Posterior vena cava (tissue), 2 donors: ENCODE measurements at regions of chr14 and their contacts with region 1.

Region 1: GRCh38 chr14:94332063-94332583 is 9.0 kb upstream of the SERPINA6 start:
- DNase-seq: no peak

Region 2: DNA sequence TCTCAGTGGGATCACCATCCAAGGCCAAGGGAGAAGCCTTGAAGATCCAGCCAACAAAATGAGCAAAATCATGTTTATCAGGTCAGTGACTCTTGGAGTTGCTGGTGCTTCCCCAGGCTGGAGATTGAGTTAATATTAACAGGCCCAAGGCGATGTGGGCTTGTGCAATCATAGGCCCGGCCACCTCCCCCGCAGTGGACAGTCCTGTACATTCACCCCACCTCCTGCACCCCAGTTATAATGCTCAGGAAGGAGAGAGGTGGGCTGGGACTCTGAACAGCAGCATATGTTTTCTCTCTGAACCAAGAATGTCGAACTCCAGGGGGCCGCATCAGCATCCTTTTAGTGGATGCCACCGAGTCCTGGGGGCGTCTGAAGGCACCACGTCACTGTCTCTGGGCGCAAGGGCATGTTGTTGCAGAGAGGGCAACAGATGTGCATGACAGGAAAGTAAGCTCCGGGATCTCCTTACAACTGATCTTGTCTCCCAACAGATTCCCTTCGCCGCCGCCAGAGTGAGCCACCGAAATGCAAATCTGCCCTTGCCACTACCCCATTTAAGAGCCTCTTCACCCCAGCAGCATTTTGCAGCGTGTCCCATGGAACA is 23.2 kb after region 1 on chr14:
- intact Hi-C with region 1: no loop called
- DNase-seq: peak; percentile 86

Region 3: GRCh38 chr14:94382716-94383596 is 50.8 kb after region 1 on chr14:
- intact Hi-C with region 1: loop called in 1 of 2 experiments (anchors 2 kb)
- DNase-seq: no peak

Region 4: GRCh38 chr14:94401083-94401482 is 69.0 kb after region 1 on chr14:
- intact Hi-C with region 1: no loop called
- DNase-seq: no peak

Region 5: GRCh38 chr14:95534299-95535225 is 1202.4 kb after region 1 on chr14 and contains the start of gene GLRX5:
- intact Hi-C with region 1: no loop called
- DNase-seq: peak; percentile 99
- total RNA-seq, gene GLRX5: 21.7 to 25.6 TPM